HCT116 (cell line): ENCODE measurements at regions of chr15 and their contacts with region 1.

Region 1: DNA sequence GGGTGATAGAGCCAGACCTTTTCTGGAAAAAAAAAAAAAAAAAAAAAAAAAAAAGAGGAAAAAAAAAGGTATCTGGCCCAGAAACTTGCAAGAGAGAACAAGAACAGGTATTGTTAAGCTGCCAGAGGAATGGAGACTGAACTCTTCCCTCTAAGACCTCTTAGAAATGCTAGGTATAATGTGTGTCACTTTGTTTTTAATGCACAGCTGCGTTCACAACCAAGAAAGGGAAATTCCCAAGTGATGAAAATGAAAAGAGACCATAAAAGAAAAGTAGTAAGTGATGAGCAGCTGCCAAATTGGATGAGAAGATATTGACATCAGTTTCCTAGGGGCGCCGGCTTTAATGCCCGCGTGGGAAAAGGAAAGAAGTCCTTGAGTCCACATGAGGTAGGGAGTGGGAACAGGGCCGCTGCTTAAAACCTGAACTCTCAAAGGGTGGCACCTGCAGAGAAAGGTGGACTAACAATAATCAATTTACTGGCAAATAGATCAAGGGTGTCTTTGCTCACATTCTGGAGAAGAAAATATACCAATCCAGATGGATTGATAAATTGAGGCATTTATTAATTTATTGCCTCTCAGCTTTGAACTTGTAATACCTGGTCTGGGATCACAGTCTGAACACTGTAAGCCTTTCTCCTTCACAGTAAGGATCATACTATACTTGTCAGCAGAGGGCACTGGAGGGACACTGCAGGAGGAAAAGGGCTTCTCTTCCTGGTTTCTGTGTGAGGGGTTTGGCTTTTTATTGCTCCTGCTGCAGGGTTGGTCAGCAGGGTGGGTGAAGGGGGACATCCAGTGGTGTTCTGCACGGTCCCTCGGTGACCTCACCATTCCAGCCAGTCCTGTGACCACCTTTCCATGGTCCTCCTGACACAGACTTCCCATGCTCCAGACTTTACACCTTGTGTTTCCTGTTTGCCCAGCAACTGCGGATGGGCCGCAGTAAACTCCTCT is 131.6 kb downstream of the AQP9 start:
- DNase-seq: peak; percentile 42
- ATAC-seq: peak; percentile 97
- H3K4me3 ChIP-seq: no peak overlapping the region
- H3K27ac ChIP-seq: peak overlapping the region; percentile 2; the same call in 1 of the 2 replicates
- H3K4me1 ChIP-seq: no peaks in the 10 kb centered on the region
- H3K27me3 ChIP-seq: no peaks in the 10 kb centered on the region
- CTCF ChIP-seq: peak; percentile 61 to 70 (median 68); a peak in 5 of 6 replicates
- POLR2A ChIP-seq: no peak
- RAD21 ChIP-seq: peak; percentile 90

Region 2: GRCh38 chr15:58043192-58043903 is 226.4 kb before region 1 on chr15:
- CTCF ChIA-PET with region 1: no interaction called
- POLR2A ChIA-PET with region 1: no interaction called
- RAD21 ChIA-PET with region 1: no interaction called
- intact Hi-C with region 1: no loop called
- DNase-seq: peak; percentile 29
- ATAC-seq: peak; percentile 84
- H3K4me3 ChIP-seq: no peak overlapping the region
- H3K27ac ChIP-seq: no peak overlapping the region
- H3K4me1 ChIP-seq: no peaks in the 10 kb centered on the region
- H3K27me3 ChIP-seq: no peaks in the 10 kb centered on the region
- CTCF ChIP-seq: peak; percentile 34 to 89 (median 76); a peak in 5 of 6 replicates
- POLR2A ChIP-seq: no peak
- RAD21 ChIP-seq: peak; percentile 37

Region 3: GRCh38 chr15:58227706-58228543 is 41.8 kb before region 1 on chr15:
- CTCF ChIA-PET with region 1: no interaction called
- POLR2A ChIA-PET with region 1: no interaction called
- RAD21 ChIA-PET with region 1: no interaction called
- intact Hi-C with region 1: no loop called
- DNase-seq: peak; percentile 78
- ATAC-seq: peak; percentile 96
- H3K4me3 ChIP-seq: no peak overlapping the region
- H3K27ac ChIP-seq: no peak overlapping the region
- H3K4me1 ChIP-seq: peaks cover 2 to 7% of the 10 kb centered on the region in 2 experiments; a peak in 1 of 4 replicates
- H3K27me3 ChIP-seq: no peaks in the 10 kb centered on the region
- CTCF ChIP-seq: peak; percentile 76 to 93 (median 87)
- POLR2A ChIP-seq: no peak
- RAD21 ChIP-seq: peak; percentile 96

Region 4: DNA sequence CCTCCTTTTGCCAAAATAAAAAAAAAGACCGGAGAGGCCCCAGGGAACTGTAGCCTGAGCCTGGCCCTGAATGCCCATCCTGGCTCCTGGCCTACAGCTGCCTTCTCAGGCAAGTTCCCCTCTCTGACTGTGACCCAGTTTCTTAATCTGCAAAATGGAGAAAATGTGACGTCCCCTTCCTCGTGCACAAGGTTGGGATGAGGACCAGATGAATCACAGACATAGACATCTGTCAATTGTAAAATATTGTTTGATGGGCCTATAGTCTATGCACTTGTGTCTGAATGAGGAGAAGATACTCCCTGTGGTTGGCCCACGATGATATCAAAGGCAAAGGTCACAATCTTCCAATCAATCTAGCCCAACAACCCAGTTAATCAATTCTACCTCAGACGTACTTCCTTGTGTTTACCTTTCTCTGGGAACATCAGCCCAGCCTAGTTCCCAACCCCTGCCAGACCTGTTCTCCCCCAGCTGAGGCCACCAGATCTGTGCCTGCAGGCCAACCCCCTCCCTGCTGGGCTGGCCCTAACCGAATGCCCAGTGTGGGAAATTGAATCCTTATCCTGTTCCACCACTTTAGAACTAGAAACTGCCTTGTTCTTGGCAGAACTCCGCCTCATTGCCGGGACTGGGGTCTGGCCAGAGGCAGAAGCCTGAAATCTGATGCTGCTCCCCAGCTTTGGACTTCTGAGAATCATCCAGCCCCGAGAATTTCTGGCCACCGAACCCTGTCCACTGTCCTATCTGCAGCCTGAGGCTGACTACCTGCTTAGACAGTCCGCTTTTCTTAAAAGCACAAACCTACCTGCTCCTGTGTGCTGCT is 60.3 kb after region 1 on chr15:
- CTCF ChIA-PET with region 1: no interaction called
- POLR2A ChIA-PET with region 1: no interaction called
- RAD21 ChIA-PET with region 1: no interaction called
- intact Hi-C with region 1: no loop called
- DNase-seq: no peak
- ATAC-seq: no peak
- H3K4me3 ChIP-seq: no peak overlapping the region
- H3K27ac ChIP-seq: peak overlapping the region; percentile 84
- H3K4me1 ChIP-seq: peaks cover 43% of the 10 kb centered on the region in 2 experiments
- H3K27me3 ChIP-seq: no peaks in the 10 kb centered on the region
- CTCF ChIP-seq: no peak
- POLR2A ChIP-seq: no peak
- RAD21 ChIP-seq: no peak

Region 5: DNA sequence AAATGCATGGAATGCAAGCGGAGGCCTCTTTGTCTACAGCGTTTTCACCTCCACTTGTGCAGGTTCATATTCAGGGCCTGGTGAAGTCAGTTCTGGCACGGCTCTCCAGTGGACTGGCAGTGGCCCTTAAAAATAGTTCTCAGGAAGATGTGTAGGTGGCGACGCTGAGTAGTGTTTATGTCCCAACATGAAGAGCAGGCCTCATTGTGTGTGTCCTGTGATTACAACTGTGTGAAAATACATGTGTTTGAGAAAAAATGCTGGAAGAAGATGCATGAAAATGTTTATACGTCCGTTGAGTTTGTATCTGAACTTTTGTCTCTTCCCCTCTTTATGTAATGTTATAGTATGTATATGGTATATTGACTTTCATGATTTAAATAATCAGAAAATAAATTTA is 169.2 kb after region 1 on chr15:
- CTCF ChIA-PET with region 1: interaction called, 3 read pairs
- POLR2A ChIA-PET with region 1: no interaction called
- RAD21 ChIA-PET with region 1: no interaction called
- intact Hi-C with region 1: loop called (anchors 10 kb)
- DNase-seq: peak; percentile 60
- ATAC-seq: peak; percentile 67
- H3K4me3 ChIP-seq: no peak overlapping the region
- H3K27ac ChIP-seq: peak overlapping the region; percentile 98
- H3K4me1 ChIP-seq: peaks cover 40 to 54% of the 10 kb centered on the region in 2 experiments
- H3K27me3 ChIP-seq: no peaks in the 10 kb centered on the region
- CTCF ChIP-seq: peak; percentile 16 to 52 (median 41); a peak in 3 of 6 replicates
- POLR2A ChIP-seq: no peak
- RAD21 ChIP-seq: peak; percentile 61

Region 6: DNA sequence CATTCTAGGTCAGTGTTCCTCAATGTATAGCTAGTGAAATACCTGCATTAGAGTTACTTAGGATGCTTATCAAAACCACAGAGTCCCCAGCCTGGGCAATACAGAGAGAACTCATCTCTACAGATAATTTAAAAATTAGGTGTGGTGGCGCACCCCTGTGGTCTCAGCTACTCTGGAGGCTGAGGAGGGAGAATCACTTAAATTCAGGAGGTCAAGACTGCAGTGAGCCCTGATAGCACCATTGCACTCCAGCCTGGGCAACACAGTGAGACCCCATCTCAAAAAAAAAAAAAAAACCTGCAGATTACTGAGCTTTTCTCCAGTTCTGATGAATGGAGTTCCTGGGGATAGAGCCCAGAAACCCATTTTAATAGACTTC is 491.3 kb after region 1 on chr15:
- CTCF ChIA-PET with region 1: no interaction called
- POLR2A ChIA-PET with region 1: no interaction called
- RAD21 ChIA-PET with region 1: interaction called in 1 of 2 experiments, 3 read pairs
- intact Hi-C with region 1: loop called (anchors 2 kb)
- DNase-seq: no peak
- ATAC-seq: no peak
- H3K4me3 ChIP-seq: no peak overlapping the region
- H3K27ac ChIP-seq: no peak overlapping the region
- H3K4me1 ChIP-seq: no peaks in the 10 kb centered on the region
- H3K27me3 ChIP-seq: no peaks in the 10 kb centered on the region
- CTCF ChIP-seq: 0 out of 6 replicates have a peak, but pooled peaks of 1 of the 3 experiments have one; percentile 15
- POLR2A ChIP-seq: no peak
- RAD21 ChIP-seq: peak; percentile 40